MCF 10A (cell line): ENCODE measurements at regions of chr3 and their contacts with region 1.

Region 1: GRCh38 chr3:49171119-49171774 is at the start of gene KLHDC8B:
- DNase-seq: peak; percentile 82
- H3K4me3 Mint-ChIP-seq: peak within 1 kb of the TSS; percentile 73
- H3K27ac Mint-ChIP-seq: peak within 1 kb of the TSS; percentile 89
- H3K4me1 Mint-ChIP-seq: peaks cover 6% of the 10 kb centered on the region
- H3K27me3 Mint-ChIP-seq: no peaks in the 10 kb centered on the region
- CTCF ChIP-seq: peak; percentile 95
- total RNA-seq, gene KLHDC8B: 1.7 and 2.4 TPM in 2 replicates

Region 2: GRCh38 chr3:48400824-48401433 is 770.3 kb before region 1 on chr3:
- CTCF ChIA-PET with region 1: no interaction called
- POLR2A ChIA-PET with region 1: no interaction called
- intact Hi-C with region 1: no loop called
- DNase-seq: peak; percentile 90
- H3K4me3 Mint-ChIP-seq: peak overlapping the region; percentile 46
- H3K27ac Mint-ChIP-seq: peak overlapping the region; percentile 95
- H3K4me1 Mint-ChIP-seq: peaks cover 34% of the 10 kb centered on the region
- H3K27me3 Mint-ChIP-seq: no peaks in the 10 kb centered on the region
- CTCF ChIP-seq: peak; percentile 96

Region 3: GRCh38 chr3:49057268-49057667 is 114.0 kb before region 1 on chr3:
- CTCF ChIA-PET with region 1: no interaction called
- POLR2A ChIA-PET with region 1: no interaction called
- intact Hi-C with region 1: no loop called
- DNase-seq: no peak
- H3K4me3 Mint-ChIP-seq: no peak overlapping the region
- H3K27ac Mint-ChIP-seq: no peak overlapping the region
- H3K4me1 Mint-ChIP-seq: peaks cover 5% of the 10 kb centered on the region
- H3K27me3 Mint-ChIP-seq: no peaks in the 10 kb centered on the region
- CTCF ChIP-seq: no peak

Region 4: DNA sequence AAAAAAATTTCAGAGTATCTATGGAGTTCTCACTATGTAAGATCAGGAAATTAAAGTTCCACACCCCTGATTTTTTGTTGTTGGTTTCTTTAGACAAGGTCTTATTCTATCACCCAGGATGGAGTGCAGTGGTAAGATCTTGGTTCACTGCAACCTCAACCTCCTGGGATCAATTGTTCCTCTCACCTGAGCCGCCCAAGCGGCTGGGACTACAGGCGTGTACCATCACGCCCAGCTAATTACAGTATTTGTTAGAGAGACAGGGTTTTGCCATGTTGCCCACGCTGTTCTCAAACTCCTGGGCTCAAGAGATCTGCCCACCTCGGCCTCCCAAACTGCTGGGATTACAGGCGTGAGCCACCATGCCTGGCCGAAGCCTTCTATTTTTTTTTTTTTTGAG is 89.8 kb before region 1 on chr3:
- CTCF ChIA-PET with region 1: no interaction called
- POLR2A ChIA-PET with region 1: no interaction called
- intact Hi-C with region 1: no loop called
- DNase-seq: peak; percentile 21
- H3K4me3 Mint-ChIP-seq: no peak overlapping the region
- H3K27ac Mint-ChIP-seq: no peak overlapping the region
- H3K4me1 Mint-ChIP-seq: no peaks in the 10 kb centered on the region
- H3K27me3 Mint-ChIP-seq: no peaks in the 10 kb centered on the region
- CTCF ChIP-seq: no peak

Region 5: DNA sequence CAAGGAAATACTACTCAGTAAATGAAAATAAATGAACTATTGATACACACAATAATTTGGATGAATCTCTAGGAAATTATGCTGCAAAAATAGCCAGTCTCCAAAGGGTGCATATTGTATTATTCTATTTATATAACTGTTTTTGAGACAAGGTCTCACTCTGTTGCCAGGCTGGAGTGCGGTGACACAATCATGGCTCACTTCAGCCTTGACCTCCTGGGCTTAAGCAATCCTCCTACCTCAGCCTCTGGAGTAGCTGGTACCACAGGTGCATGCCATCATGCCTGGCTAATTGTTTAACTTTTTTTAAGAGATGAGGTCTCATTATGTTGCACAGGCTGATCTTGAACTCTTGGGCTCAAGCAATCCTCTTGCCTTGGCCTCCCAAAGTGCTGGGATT is 12.6 kb after region 1 on chr3:
- CTCF ChIA-PET with region 1: interaction called, 20 read pairs
- POLR2A ChIA-PET with region 1: interaction called, 3 read pairs
- intact Hi-C with region 1: no loop called
- DNase-seq: no peak
- H3K4me3 Mint-ChIP-seq: no peak overlapping the region
- H3K27ac Mint-ChIP-seq: no peak overlapping the region
- H3K4me1 Mint-ChIP-seq: no peaks in the 10 kb centered on the region
- H3K27me3 Mint-ChIP-seq: no peaks in the 10 kb centered on the region
- CTCF ChIP-seq: no peak

Region 6: DNA sequence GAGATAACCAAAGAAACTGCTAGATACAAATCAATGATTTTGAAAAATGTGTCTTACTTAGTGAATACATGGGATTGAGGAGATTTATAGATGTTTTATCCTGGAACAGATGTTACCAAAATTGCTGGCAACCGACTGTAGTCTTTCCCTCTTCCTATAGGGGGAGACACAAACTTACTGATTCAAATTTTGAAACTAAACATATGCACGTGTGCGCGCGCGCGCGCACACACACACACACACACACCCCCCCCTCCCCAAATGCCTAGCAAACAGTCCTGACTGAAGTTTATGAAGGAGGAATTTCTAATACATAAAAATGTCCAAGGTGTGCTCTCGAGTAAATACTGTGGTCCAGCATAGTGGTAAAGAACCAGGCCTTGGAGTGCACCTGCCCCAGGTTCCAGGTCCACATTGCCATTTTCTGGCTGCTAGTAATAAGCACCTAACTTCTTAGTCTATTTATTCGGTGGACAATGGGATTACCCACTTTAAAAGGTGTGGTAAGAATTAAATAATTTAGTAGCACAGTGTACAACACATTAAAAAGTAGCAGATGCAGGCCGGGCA is 124.3 kb after region 1 on chr3:
- CTCF ChIA-PET with region 1: interaction called, 11 read pairs
- POLR2A ChIA-PET with region 1: interaction called, 5 read pairs
- intact Hi-C with region 1: loop called (anchors 5 kb)
- DNase-seq: peak; percentile 35
- H3K4me3 Mint-ChIP-seq: no peak overlapping the region
- H3K27ac Mint-ChIP-seq: peak overlapping the region; percentile 23
- H3K4me1 Mint-ChIP-seq: peaks cover 7% of the 10 kb centered on the region
- H3K27me3 Mint-ChIP-seq: no peaks in the 10 kb centered on the region
- CTCF ChIP-seq: peak; percentile 55